T-cell (primary cell): ENCODE measurements at regions of chr14 and their contacts with region 1.

Region 1: GRCh38 chr14:20873370-20874177 is 17.6 kb upstream of the RNASE3 start:
- DNase-seq: peak; percentile 32 to 83 (median 67)
- ATAC-seq: peak; percentile 79 to 92 (median 84)
- H3K4me3 ChIP-seq: no peak overlapping the region
- H3K4me3 Mint-ChIP-seq: peak overlapping the region; percentile 13 to 31 (median 15)
- H3K27ac ChIP-seq: no peak overlapping the region
- H3K27ac Mint-ChIP-seq: no peak overlapping the region
- H3K4me1 ChIP-seq: peaks cover 3 to 10% of the 10 kb centered on the region in 2 experiments
- H3K4me1 Mint-ChIP-seq: peaks cover 9 to 14% (median 9%) of the 10 kb centered on the region in 3 donors
- H3K27me3 ChIP-seq: peaks cover 0 to 15% of the 10 kb centered on the region in 2 experiments
- H3K27me3 Mint-ChIP-seq: peaks cover 19% of the 10 kb centered on the region in 2 donors

Region 2: DNA sequence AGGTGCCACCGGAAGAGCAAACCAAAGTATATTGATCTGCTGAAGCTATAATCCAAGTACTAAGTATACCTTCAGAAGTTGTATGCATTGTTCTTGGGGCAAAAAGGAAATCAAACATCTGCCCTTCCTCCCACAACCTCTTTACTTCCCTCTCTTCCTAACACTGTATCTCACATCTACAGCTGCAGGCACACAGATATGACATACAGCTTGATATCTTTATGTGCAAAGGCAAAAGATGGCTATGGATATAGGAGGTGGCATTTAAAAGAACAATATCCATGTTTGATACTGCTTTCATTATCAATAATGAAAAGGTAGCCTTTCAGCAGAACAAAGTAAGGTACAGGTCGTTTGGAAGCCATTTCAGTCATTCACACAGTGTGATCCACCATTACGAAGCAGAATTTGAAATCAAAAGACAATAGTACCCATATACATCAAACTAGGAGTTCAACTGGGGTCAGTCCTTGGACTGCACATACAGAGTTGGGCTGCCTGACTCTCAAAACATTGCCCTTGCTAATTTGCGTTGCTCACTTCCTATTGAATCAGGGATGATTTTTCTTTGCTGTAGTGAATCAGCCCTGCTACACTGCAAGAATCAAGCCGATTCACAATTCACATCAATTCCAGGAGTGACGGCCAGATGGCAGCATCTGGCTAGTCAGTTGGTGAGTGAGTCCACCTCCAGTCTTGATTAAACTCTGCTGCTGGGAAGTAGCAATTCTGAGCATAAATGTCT is 176.1 kb before region 1 on chr14:
- CTCF ChIA-PET with region 1: interaction called in 1 of 2 experiments, 11 read pairs
- POLR2A ChIA-PET with region 1: interaction called in 1 of 2 experiments, 3 read pairs
- DNase-seq: peak in 34 of 35 experiments; percentile 13 to 79 (median 51)
- ATAC-seq: peak; percentile 57 to 76 (median 73)
- H3K4me3 ChIP-seq: no peak overlapping the region
- H3K4me3 Mint-ChIP-seq: no peak overlapping the region
- H3K27ac ChIP-seq: no peak overlapping the region
- H3K27ac Mint-ChIP-seq: no peak overlapping the region
- H3K4me1 ChIP-seq: no peaks in the 10 kb centered on the region
- H3K4me1 Mint-ChIP-seq: peaks cover 0 to 2% (median 0%) of the 10 kb centered on the region in 3 donors
- H3K27me3 ChIP-seq: peaks cover 0 to 7% of the 10 kb centered on the region in 2 experiments
- H3K27me3 Mint-ChIP-seq: peaks cover 0 to 2% of the 10 kb centered on the region in 2 donors